Activated CD8-positive, alpha-beta T cell treated with anti-CD3 and anti-CD28 coated beads for 36 hours (primary cell): ENCODE measurements at regions of chr1 and their contacts with region 1.

Region 1: GRCh38 chr1:19390901-19391595 is 78.9 kb downstream of the SLC66A1 start:
- DNase-seq: peak; percentile 73
- ATAC-seq: peak; percentile 61
- H3K4me3 Mint-ChIP-seq: peak overlapping the region; percentile 61
- H3K27ac Mint-ChIP-seq: peak overlapping the region; percentile 92
- H3K4me1 Mint-ChIP-seq: peaks cover 70% of the 10 kb centered on the region
- H3K27me3 Mint-ChIP-seq: no peaks in the 10 kb centered on the region
- CTCF ChIP-seq: peak; percentile 94

Region 2: DNA sequence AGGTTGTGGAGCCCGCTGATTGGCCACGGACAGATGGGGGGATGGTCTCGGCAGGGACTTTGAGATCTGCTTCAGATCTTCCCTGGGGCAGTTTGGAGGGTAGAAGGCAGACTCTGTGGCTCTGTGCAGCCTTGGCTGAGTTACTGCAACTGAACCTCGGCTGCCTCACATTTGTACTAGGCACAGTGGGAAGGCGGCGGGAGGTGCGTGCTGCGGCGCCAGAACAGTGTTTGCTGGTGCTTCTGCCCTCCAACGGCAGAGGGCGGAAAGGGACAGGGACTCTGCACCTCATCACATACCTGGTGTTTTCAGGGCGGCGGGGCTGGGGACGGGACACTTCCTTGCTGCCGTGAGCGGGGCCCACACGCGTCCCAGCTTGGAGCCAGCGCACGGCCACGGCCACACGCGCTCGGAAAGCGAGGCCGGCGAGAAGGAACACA is 52.7 kb before region 1 on chr1:
- CTCF ChIA-PET with region 1: no interaction called
- POLR2A ChIA-PET with region 1: no interaction called
- intact Hi-C with region 1: no loop called
- DNase-seq: no peak
- ATAC-seq: no peak
- H3K4me3 Mint-ChIP-seq: no peak overlapping the region
- H3K27ac Mint-ChIP-seq: peak overlapping the region; percentile 76
- H3K4me1 Mint-ChIP-seq: peaks cover 22% of the 10 kb centered on the region
- H3K27me3 Mint-ChIP-seq: no peaks in the 10 kb centered on the region
- CTCF ChIP-seq: no peak

Region 3: DNA sequence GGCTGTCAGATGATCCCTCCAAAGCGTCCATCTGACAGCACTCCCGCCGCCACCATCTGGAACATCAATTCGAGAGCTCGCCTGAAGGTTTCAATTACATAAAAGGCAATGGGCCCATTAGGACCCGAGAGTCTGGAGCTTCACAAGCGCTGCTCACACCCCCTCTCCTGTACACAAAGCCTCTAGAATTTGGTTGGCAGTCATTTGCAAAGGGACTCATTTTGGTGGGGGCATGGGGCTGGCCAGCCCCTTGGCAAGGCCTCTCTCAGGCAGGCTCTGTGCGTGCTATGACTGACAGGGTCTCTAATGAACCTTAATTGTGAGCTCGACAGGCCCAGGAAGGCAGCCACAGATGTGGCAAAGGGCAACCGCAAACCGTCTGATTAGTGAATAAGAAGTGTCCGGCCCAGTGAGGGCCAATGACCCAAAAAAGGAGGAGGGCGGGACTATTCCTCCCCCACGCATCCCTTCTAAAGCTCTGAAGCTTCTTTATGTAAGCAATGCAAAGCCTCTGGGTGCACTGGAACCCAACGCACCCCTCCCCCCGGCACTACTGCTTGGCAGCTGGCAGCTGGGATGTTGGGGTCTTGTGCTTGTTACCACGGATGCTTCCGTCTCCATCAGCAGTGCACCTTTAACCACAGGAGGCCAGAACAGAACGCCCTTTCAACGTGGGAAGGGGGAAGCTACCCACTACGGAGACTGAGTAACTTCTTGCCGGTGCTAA is 14.9 kb after region 1 on chr1:
- CTCF ChIA-PET with region 1: interaction called, 18 read pairs
- POLR2A ChIA-PET with region 1: interaction called, 3 read pairs
- intact Hi-C with region 1: no loop called
- DNase-seq: peak; percentile 49
- ATAC-seq: peak; percentile 56
- H3K4me3 Mint-ChIP-seq: no peak overlapping the region
- H3K27ac Mint-ChIP-seq: peak overlapping the region; percentile 50
- H3K4me1 Mint-ChIP-seq: peaks cover 69% of the 10 kb centered on the region
- H3K27me3 Mint-ChIP-seq: no peaks in the 10 kb centered on the region
- CTCF ChIP-seq: no peak

Region 4: DNA sequence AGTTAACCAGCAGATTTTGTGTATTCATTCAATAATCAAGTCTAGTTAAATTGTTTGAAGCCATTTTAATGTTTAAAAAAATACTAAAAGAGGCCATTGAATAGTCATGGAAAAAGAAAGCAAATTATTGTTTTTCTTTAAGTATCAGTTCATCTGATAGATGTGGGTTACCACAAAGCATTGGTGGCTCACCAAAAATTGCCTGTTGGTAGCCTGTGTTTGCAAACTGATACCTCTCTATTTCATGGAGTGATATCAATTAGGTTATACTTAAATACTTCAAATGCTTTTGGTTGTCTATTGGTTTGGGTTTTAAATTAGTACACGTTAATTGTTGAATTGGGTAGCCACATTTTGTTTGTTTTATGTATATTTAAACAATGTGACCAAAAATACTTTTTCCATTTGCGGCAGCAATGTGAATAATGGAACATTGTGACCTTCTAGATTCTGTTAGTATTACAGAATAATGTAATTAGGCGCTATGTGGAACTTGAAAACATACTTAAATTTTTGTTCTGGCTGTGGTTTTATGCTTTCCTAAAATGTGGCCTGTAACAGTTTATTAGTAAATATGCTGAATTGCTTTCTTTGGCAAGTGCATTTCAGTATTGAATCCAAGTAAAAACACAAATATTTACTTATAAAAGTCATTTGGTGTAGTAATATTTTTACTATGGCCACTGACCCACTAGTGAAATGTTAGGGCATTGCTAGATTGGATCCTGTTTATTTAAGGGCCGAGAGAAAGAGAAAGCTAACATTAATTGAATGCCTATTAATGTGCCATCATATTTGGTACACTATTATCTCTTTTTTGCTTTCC is 216.0 kb after region 1 on chr1:
- CTCF ChIA-PET with region 1: no interaction called
- POLR2A ChIA-PET with region 1: no interaction called
- intact Hi-C with region 1: no loop called
- DNase-seq: peak; percentile 86
- ATAC-seq: peak; percentile 66
- H3K4me3 Mint-ChIP-seq: peak overlapping the region; percentile 2
- H3K27ac Mint-ChIP-seq: peak overlapping the region; percentile 74
- H3K4me1 Mint-ChIP-seq: peaks cover 66% of the 10 kb centered on the region
- H3K27me3 Mint-ChIP-seq: no peaks in the 10 kb centered on the region
- CTCF ChIP-seq: no peak